ENCODE measurements at regions of chr6 and their contacts with region 1.

Region 1: DNA sequence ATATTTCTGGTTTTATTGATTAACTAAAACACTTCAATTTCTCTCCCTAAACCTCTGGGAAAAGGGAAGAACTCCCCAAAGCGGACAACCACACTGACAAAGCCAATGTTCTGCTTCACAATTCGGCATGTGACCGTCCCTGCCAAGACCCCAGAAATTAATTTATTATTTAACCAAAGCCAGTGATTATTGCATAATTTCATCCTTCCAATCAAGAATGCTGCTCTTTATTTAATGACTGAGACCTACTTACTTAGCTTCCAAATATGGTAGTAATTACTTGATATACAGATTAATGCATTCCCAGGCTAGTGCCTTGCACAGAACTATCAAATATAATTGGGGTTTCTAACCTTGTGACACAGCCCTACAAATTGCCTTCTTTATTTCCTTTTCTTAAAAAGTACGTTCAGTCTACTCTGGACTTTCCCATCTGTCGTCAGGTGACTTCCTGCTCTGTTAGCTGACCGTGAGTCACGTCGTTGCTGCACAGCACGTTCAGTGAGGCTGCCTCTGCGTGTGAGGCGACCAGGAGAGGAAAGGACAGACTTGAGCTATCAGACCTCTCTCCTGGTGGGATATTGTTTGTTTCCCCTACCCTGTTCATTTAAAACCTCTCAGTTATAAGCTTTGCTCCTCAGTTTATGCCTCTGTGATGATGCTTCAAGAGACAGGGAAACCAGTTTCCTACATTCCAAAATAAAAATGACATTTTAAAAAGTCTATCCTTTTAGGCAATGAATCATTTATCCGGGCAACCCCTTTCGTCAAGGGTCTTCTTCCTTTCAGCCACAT is 55.7 kb upstream of the TNFAIP3 start:
- DNase-seq: peak; percentile 78
- H3K4me3 Mint-ChIP-seq: peak overlapping the region; percentile 14
- H3K27ac Mint-ChIP-seq: peak overlapping the region; percentile 61
- H3K4me1 Mint-ChIP-seq: peaks cover 40% of the 10 kb centered on the region
- H3K27me3 Mint-ChIP-seq: no peaks in the 10 kb centered on the region

Region 2: DNA sequence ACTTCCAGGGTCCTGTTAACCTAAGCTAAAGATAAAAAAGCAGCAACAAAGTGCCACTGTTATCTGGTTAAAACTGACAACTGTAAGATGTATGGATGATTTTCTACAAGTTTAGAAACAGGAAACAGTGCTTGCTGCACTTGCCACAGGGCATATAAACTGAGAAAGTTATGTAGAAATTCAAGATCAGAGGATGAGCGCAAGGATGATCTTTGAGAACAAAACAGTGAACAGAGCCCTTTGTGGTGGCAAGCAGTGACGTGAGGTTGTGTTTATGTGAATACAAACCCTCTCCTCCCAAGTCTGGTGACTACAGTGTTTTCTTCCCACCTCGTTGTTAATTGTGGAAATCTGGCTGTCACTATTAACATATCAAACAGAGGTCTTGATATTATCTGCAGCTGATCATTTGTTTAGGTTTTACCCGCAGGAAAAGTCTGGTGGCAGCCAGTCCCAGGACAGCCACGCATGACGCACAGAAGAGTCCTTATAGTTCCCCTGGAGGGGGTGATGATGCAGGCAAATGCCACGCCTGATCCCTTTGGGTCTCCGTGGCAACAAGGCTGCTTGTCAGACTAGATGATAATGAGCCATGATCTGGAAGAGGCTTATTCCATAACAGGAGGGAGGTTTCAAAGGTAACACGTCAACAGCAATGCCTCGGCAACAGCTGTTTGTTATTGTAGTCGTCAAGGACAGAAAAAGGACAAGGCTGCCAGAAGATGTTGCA is 12.7 kb after region 1 on chr6:
- CTCF ChIA-PET with region 1: interaction called, 13 read pairs
- DNase-seq: peak; percentile 84
- H3K4me3 Mint-ChIP-seq: peak overlapping the region; percentile 58
- H3K27ac Mint-ChIP-seq: peak overlapping the region; percentile 99
- H3K4me1 Mint-ChIP-seq: peaks cover 78% of the 10 kb centered on the region
- H3K27me3 Mint-ChIP-seq: no peaks in the 10 kb centered on the region